CD4-positive, alpha-beta memory T cell (primary cell): ENCODE measurements at regions of chr7 and their contacts with region 1.

Region 1: GRCh38 chr7:100611974-100612729 is at the start of gene MOSPD3:
- DNase-seq: peak; percentile 98 to 99 (median 98)
- H3K4me3 ChIP-seq: peak within 1 kb of the TSS; percentile 74 to 96
- H3K4me3 Mint-ChIP-seq: peak within 1 kb of the TSS; percentile 96 to 100 (median 98)
- H3K27ac ChIP-seq: peak within 1 kb of the TSS; percentile 85
- H3K27ac Mint-ChIP-seq: peak within 1 kb of the TSS; percentile 96 to 100 (median 100)
- H3K4me1 ChIP-seq: peaks cover 18% of the 10 kb centered on the region
- H3K4me1 Mint-ChIP-seq: peaks cover 14 to 32% (median 24%) of the 10 kb centered on the region in 4 donors
- H3K27me3 ChIP-seq: no peaks in the 10 kb centered on the region
- H3K27me3 Mint-ChIP-seq: no peaks in the 10 kb centered on the region
- total RNA-seq, gene MOSPD3: 13.4 to 15.6 TPM

Region 2: GRCh38 chr7:100626530-100627237 is 14.5 kb after region 1 on chr7:
- CTCF ChIA-PET with region 1: interaction called, 7 read pairs
- POLR2A ChIA-PET with region 1: interaction called, 64 read pairs
- intact Hi-C with region 1: loop called (anchors 1 kb)
- DNase-seq: peak; percentile 79 to 91 (median 82)
- H3K4me3 ChIP-seq: peak overlapping the region; percentile 36 to 67
- H3K4me3 Mint-ChIP-seq: peak overlapping the region; percentile 61 to 83 (median 76)
- H3K27ac ChIP-seq: peak overlapping the region; percentile 63
- H3K27ac Mint-ChIP-seq: peak overlapping the region; percentile 45 to 94 (median 83)
- H3K4me1 ChIP-seq: peaks cover 24% of the 10 kb centered on the region
- H3K4me1 Mint-ChIP-seq: peaks cover 15 to 41% (median 28%) of the 10 kb centered on the region in 4 donors
- H3K27me3 ChIP-seq: no peaks in the 10 kb centered on the region
- H3K27me3 Mint-ChIP-seq: no peaks in the 10 kb centered on the region

Region 3: GRCh38 chr7:100632951-100633717 is 21.0 kb after region 1 on chr7:
- CTCF ChIA-PET with region 1: interaction called, 52 read pairs
- POLR2A ChIA-PET with region 1: interaction called, 64 read pairs
- intact Hi-C with region 1: no loop called
- DNase-seq: peak; percentile 45 to 66 (median 55)
- H3K4me3 ChIP-seq: peak overlapping the region; percentile 22 to 68
- H3K4me3 Mint-ChIP-seq: peak overlapping the region; percentile 76 to 89 (median 85)
- H3K27ac ChIP-seq: peak overlapping the region; percentile 58
- H3K27ac Mint-ChIP-seq: peak overlapping the region in 6 of 7 donors; percentile 42 to 91 (median 76)
- H3K4me1 ChIP-seq: peaks cover 8% of the 10 kb centered on the region
- H3K4me1 Mint-ChIP-seq: peaks cover 10 to 26% (median 18%) of the 10 kb centered on the region in 4 donors
- H3K27me3 ChIP-seq: no peaks in the 10 kb centered on the region
- H3K27me3 Mint-ChIP-seq: no peaks in the 10 kb centered on the region

Region 4: DNA sequence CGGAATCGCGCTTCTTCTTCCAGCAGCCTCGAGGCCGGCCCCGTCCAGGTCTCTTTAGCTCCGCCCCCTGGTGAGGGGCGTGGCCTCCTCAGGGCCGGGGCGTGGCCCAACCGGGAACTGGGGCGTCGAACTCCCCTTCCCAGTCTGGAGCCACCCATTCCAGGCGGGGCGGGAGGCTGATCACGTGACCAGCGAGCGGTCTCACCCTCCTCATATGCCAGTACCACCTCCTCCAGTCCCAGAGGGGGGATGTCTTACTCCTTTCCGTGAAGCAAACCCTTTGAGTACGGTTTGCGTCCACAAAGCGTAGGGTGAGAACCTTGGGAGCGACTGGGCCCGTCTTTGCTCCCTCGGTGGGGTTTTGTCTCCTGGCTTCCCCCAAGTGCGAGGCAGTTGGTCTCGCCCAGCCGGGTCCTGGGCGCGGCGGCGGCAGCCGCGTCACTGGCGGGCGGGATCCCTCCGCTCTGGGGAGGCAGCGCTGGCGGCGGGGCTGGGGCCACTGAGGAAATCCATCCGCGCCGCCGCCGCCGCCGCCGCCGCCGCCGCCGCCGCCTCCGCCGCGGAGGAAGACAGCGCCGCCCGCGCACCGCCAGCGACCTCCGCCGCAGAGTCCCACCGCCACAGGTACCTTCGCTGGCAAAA is 61.3 kb after region 1 on chr7 and contains the start of gene GNB2:
- CTCF ChIA-PET with region 1: interaction called, 4 read pairs
- POLR2A ChIA-PET with region 1: interaction called, 70 read pairs
- intact Hi-C with region 1: loop called (anchors 1 kb)
- DNase-seq: peak; percentile 97 to 98 (median 97)
- H3K4me3 ChIP-seq: peak within 1 kb of the TSS; percentile 80 to 91
- H3K4me3 Mint-ChIP-seq: peak within 1 kb of the TSS; percentile 94 to 99 (median 96)
- H3K27ac ChIP-seq: peak within 1 kb of the TSS; percentile 92
- H3K27ac Mint-ChIP-seq: peak within 1 kb of the TSS; percentile 96 to 99 (median 97)
- H3K4me1 ChIP-seq: peaks cover 30% of the 10 kb centered on the region
- H3K4me1 Mint-ChIP-seq: peaks cover 3 to 33% (median 14%) of the 10 kb centered on the region in 4 donors
- H3K27me3 ChIP-seq: no peaks in the 10 kb centered on the region
- H3K27me3 Mint-ChIP-seq: peaks cover 0 to 1% of the 10 kb centered on the region in 2 donors
- total RNA-seq, gene GNB2: 138 to 144 TPM

Region 5: GRCh38 chr7:100680167-100680575 is 68.0 kb after region 1 on chr7:
- CTCF ChIA-PET with region 1: interaction called, 4 read pairs
- POLR2A ChIA-PET with region 1: interaction called, 70 read pairs
- intact Hi-C with region 1: no loop called
- DNase-seq: no peak
- H3K4me3 ChIP-seq: no peak overlapping the region
- H3K4me3 Mint-ChIP-seq: peak overlapping the region in 2 of 8 donors; percentile 7 to 18
- H3K27ac ChIP-seq: peak overlapping the region; percentile 9
- H3K27ac Mint-ChIP-seq: peak overlapping the region; percentile 37 to 90 (median 75)
- H3K4me1 ChIP-seq: peaks cover 41% of the 10 kb centered on the region
- H3K4me1 Mint-ChIP-seq: peaks cover 7 to 43% (median 29%) of the 10 kb centered on the region in 4 donors
- H3K27me3 ChIP-seq: no peaks in the 10 kb centered on the region
- H3K27me3 Mint-ChIP-seq: peaks cover 0 to 1% of the 10 kb centered on the region in 2 donors

Region 6: GRCh38 chr7:100852048-100852872 is 240.1 kb after region 1 on chr7 and contains the start of gene SLC12A9:
- CTCF ChIA-PET with region 1: no interaction called
- POLR2A ChIA-PET with region 1: no interaction called
- intact Hi-C with region 1: loop called (anchors 1 kb)
- DNase-seq: peak; percentile 83 to 91 (median 88)
- H3K4me3 ChIP-seq: peak within 1 kb of the TSS; percentile 84 to 86
- H3K4me3 Mint-ChIP-seq: peak within 1 kb of the TSS; percentile 88 to 96 (median 92)
- H3K27ac ChIP-seq: peak within 1 kb of the TSS; percentile 51
- H3K27ac Mint-ChIP-seq: peak within 1 kb of the TSS; percentile 88 to 95 (median 93)
- H3K4me1 ChIP-seq: peaks cover 25% of the 10 kb centered on the region
- H3K4me1 Mint-ChIP-seq: peaks cover 11 to 36% (median 20%) of the 10 kb centered on the region in 4 donors
- H3K27me3 ChIP-seq: no peaks in the 10 kb centered on the region
- H3K27me3 Mint-ChIP-seq: no peaks in the 10 kb centered on the region
- total RNA-seq, gene SLC12A9: 63.7 to 64.6 TPM